Posterior vena cava (tissue), 2 donors: ENCODE measurements at regions of chr11 and their contacts with region 1.

Region 1: GRCh38 chr11:86726118-86726748 is 53.8 kb upstream of the ME3 start:
- DNase-seq: no peak

Region 2: GRCh38 chr11:86787018-86787536 is 60.8 kb after region 1 on chr11:
- intact Hi-C with region 1: loop called in 1 of 2 experiments (anchors 2 kb)
- DNase-seq: no peak

Region 3: GRCh38 chr11:86800076-86800959 is 74.1 kb after region 1 on chr11 and contains the start of gene PRSS23:
- intact Hi-C with region 1: no loop called
- DNase-seq: peak; percentile 90
- total RNA-seq, gene PRSS23: 208 to 261 TPM

Region 4: DNA sequence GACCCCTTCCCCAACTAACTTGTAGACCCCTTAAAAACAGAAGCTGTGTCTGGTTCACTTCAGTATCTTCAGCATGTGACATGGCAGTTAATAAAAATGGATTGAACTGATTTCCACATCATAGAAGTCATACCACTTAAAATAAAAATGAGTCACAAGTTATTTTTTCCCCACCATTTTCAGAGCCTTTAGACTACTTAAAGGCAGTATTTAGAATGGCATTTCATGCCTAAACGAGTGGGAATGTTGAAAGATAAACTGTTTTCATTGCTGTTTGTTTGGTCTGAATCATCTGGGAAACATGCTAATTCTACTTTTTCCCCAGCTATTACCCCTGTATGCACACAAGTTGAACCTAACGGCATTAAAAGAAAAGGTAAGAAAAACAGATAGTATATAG is 1125.0 kb after region 1 on chr11:
- intact Hi-C with region 1: no loop called
- DNase-seq: no peak